ENCODE measurements at regions of chr15 and their contacts with region 1.

Region 1: GRCh38 chr15:68875377-68876116 is 54.8 kb upstream of the SPESP1 start:
- H3K4me3 ChIP-seq: peak overlapping the region; percentile 3
- H3K27ac ChIP-seq: no peak overlapping the region
- H3K4me1 ChIP-seq: no peaks in the 10 kb centered on the region
- CTCF ChIP-seq: peak; percentile 98

Region 2: GRCh38 chr15:68542771-68543164 is 332.8 kb before region 1 on chr15:
- CTCF ChIA-PET with region 1: interaction called, 12 read pairs
- POLR2A ChIA-PET with region 1: no interaction called
- H3K4me3 ChIP-seq: no peak overlapping the region
- H3K27ac ChIP-seq: no peak overlapping the region
- H3K4me1 ChIP-seq: no peaks in the 10 kb centered on the region
- CTCF ChIP-seq: no peak

Region 3: DNA sequence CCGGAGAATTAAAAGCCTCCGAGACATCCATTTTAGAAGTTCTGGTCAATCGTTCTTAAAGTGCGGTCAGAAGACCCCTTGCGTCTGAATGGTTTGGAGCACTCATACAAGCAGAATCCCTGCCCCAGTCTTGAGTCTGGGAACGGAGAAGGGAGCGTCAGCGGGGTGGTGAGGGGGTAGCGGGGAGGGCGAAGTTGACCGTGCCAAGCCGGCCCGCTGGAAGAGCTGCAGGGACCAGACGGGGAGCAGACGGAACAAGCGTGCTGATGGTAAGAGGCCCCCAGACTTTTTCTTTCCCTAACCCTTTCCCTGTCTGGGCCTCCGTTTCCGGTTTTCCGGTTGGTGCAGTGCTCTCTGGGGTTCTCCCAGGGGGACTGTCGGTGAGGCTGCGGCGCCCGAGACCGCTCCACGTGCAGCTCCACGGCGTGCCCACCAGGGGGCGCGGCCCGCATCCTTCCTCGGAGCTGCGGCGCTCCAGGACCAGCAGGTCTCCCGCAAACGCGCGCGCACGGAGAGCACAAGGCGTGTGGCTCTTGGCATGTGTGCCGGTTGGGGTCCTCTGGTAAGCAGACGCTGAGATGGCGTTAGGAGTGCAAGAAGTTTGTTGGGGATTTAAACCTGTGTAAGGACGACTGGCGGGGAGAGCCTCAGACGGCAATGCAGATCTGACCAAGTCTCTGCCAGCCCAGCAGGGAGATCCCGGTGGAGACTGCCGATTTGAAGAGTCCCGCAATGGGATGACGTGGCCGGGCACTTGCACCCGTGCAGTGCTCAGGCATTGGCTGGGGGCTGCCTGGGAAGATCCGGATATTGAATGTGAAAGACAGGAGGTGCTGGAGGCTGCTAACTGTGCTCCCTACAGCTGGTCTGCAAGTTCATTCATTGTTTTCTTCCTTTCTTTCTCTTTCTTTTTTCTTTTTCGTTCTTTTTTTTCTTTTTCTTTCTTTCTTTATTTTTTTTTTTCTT is 315.9 kb before region 1 on chr15:
- CTCF ChIA-PET with region 1: interaction called, 45 read pairs
- POLR2A ChIA-PET with region 1: no interaction called
- H3K4me3 ChIP-seq: peak overlapping the region; percentile 44
- H3K27ac ChIP-seq: no peak overlapping the region
- H3K4me1 ChIP-seq: no peaks in the 10 kb centered on the region
- CTCF ChIP-seq: peak; percentile 99

Region 4: GRCh38 chr15:68765602-68766368 is 109.8 kb before region 1 on chr15:
- CTCF ChIA-PET with region 1: interaction called, 12 read pairs
- POLR2A ChIA-PET with region 1: no interaction called
- H3K4me3 ChIP-seq: no peak overlapping the region
- H3K27ac ChIP-seq: no peak overlapping the region
- H3K4me1 ChIP-seq: peaks cover 5% of the 10 kb centered on the region
- CTCF ChIP-seq: no peak

Region 5: GRCh38 chr15:68829068-68829467 is 46.5 kb before region 1 on chr15:
- CTCF ChIA-PET with region 1: interaction called, 12 read pairs
- POLR2A ChIA-PET with region 1: interaction called, 6 read pairs
- H3K4me3 ChIP-seq: no peak overlapping the region
- H3K27ac ChIP-seq: no peak overlapping the region
- H3K4me1 ChIP-seq: no peaks in the 10 kb centered on the region
- CTCF ChIP-seq: 0 out of 2 replicates have a peak, but pooled peaks have one; percentile 20

Region 6: DNA sequence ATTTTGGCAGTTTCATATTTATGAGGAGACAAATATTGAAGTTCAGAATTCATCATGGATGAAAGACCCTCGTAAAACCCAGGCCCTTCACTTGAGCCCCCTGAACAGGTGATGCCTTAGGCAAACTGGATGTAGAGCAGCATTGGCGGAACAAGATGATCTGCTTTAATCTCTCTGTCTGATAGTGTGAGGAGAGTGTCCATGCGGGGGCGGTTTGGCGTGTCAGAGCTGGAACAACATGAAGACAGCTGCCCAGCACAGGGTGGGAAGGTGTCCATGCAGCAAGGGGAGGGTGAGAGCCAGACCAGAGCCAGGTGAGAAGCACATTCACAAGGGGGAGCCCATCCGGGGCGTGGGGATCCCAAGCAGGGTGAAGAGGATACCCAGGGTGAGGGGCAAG is 23.1 kb before region 1 on chr15:
- CTCF ChIA-PET with region 1: interaction called, 12 read pairs
- POLR2A ChIA-PET with region 1: no interaction called
- H3K4me3 ChIP-seq: no peak overlapping the region
- H3K27ac ChIP-seq: no peak overlapping the region
- H3K4me1 ChIP-seq: no peaks in the 10 kb centered on the region
- CTCF ChIP-seq: no peak

Region 7: GRCh38 chr15:68924866-68925560 is 49.5 kb after region 1 on chr15:
- CTCF ChIA-PET with region 1: interaction called, 49 read pairs
- POLR2A ChIA-PET with region 1: interaction called, 5 read pairs
- H3K4me3 ChIP-seq: no peak overlapping the region
- H3K27ac ChIP-seq: no peak overlapping the region
- H3K4me1 ChIP-seq: no peaks in the 10 kb centered on the region
- CTCF ChIP-seq: peak; percentile 92

Region 8: DNA sequence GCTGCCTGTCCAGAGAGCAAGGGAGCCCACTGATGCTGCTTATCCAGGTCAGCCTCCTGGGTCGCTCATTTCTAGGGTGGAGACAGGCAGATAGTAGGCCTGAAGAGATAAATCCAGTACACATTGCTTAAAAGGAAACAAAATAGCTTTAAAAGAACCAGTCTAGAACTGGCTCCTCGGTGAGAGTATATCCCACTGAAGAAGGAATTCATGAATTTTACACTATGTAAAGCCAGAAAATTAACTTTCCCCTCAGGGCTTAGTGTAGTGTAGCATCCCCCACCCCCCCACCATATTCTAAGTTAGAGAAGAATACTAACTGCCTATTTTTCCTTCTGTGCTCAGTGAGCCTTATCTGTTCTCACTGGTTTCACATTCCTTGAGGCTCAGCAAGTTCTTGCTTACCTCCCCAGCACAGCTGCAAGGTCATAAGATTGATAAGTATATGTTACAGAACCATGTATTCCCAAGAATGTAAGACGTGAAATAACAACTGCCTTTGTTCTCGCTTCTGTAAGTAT is 108.5 kb after region 1 on chr15:
- CTCF ChIA-PET with region 1: no interaction called
- POLR2A ChIA-PET with region 1: no interaction called
- H3K4me3 ChIP-seq: no peak overlapping the region
- H3K27ac ChIP-seq: no peak overlapping the region
- H3K4me1 ChIP-seq: no peaks in the 10 kb centered on the region
- CTCF ChIP-seq: no peak

Measured in HEK293 (cell line).